ENCODE measurements at regions of chr3 and their contacts with region 1.

Region 1: DNA sequence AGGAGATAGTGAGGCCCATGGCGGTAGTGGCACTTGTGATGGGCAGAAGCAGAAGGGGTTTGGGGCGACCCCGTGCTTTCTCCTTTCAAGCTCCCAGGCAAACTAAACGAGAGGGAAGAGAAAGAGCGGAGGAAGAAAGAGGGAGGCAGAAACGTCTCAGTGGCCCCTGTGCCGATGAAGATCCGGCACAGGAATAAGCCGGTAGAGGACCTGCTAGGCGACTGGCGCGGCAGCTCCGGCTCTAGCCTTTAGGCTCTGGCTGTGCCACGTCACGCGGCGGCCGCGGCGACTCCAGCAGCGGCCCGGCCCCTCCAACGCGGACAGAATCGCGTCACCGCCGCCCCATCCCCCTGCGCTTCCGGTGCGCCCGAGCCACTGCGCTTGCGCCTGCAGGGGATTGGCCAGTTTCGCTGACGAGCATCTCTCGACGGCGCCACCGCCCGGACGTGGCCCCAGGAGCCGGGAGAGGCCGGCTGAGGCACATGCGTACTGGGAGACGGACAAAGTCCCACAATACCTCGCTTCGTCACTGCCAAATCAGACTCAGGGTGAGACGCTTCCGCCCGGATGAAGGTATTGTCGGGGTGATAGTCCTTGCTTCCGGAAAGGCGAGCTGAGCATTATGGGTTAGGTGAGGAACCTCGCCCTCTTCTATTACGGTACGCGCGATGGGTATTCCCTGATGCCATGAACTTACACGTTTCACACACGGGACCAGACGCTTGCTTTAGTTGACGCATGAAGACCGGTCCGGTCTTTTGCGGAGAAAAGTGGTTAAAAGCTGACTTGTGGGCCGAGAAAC is at the start of gene ARF4:
- DNase-seq: peak; percentile 100
- H3K4me3 ChIP-seq: peak within 1 kb of the TSS; percentile 77 to 85 (median 79)
- H3K27ac ChIP-seq: peak within 1 kb of the TSS; percentile 94 to 99 (median 98)
- H3K4me1 ChIP-seq: peaks cover 0 to 50% (median 45%) of the 10 kb centered on the region in 4 donors
- H3K27me3 ChIP-seq: no peaks in the 10 kb centered on the region
- CTCF ChIP-seq: no peak
- EP300 ChIP-seq: peak in 2 of 4 donors; percentile 58 to 86
- POLR2A ChIP-seq: peak; percentile 99
- total RNA-seq, gene ARF4: 88.1 to 96.9 (median 89.3) TPM

Region 2: DNA sequence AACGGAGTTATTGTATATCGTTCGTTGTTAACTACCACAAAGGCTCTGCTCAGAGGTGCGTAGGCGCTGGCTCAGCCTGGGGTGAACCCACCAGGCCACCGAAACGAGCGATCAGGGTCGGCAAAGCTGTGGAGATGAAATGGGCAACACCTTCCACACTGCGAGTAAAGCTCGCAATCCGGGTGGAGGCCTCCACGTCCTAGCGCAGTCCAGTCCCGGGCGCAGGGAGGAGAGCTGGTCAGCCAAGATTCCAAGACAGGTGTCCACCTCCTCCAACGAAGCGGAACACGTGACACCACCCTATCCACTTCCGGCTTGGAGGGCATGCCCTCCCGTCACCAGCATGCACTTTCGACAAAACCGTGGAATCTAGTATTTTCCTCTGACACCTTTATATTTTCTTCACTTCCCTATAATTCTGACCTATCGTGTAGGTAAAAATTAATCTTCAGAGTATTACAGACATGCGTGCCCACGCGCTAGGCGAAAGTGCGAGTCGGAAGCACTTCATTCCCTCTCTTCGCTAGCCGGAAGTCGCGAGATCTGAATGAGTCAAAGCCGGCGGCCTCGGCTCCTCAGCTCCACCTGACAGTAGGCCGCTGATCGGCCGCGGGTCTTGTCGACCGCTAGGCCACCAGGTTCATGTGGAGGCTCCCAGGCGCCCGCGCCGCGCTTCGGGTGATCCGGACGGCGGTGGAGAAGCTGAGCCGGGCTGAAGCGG is 41.4 kb before region 1 on chr3 and contains the start of gene PDE12:
- intact Hi-C with region 1: loop called (anchors 1 kb)
- DNase-seq: peak; percentile 92
- H3K4me3 ChIP-seq: peak within 1 kb of the TSS; percentile 80 to 93 (median 90)
- H3K27ac ChIP-seq: peak within 1 kb of the TSS; percentile 91 to 98 (median 94)
- H3K4me1 ChIP-seq: peaks cover 0 to 39% (median 30%) of the 10 kb centered on the region in 4 donors
- H3K27me3 ChIP-seq: no peaks in the 10 kb centered on the region
- CTCF ChIP-seq: no peak
- EP300 ChIP-seq: no peak
- POLR2A ChIP-seq: peak; percentile 62 to 83
- total RNA-seq, gene PDE12: 11.4 to 17.9 (median 12.4) TPM

Region 3: DNA sequence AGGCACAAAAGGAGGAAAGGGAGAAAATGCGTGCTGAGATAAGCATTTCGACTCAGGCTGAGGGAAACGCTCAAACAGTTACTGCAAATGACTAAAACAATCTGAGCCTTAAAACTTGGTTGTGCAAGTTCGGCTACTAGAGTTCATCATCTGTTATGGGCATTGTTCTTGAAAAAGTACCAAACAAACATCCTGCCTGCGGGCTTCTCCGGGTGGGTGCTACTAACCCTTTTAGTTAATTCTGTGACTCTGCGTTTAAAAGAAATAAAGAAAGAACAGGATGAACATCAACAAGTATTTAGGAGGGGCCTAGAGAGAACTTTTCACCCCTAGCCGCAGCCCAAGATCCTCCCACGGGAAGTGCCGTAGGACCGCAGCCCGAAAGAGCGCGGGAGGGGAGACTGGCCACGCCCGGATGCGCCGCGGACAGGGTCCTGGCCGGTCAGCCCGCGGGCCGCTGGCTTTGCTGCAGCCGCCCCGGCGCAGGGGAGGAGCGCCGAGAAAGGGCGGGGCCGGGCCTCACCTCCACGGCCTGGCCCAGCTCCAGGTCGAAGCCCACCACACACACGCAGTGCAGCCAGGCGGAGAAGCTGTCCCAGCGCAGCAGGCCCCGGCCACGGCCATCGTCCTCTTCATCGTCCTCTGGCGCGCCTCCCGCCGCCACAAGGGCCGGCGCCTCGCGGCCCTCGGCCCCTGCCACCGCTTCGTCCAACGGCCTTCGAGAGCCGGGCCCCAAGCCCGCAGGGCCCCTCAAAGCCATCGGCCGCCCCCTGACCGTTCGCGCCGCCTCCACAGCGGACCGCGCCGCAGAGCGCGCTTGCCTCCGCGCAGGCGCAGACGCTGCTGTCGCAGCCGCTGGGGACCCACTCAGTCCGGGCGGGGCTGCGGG is 95.2 kb after region 1 on chr3 and contains the start of gene DENND6A:
- intact Hi-C with region 1: loop called (anchors 5 kb)
- DNase-seq: peak; percentile 95
- H3K4me3 ChIP-seq: peak within 1 kb of the TSS; percentile 84 to 99 (median 97)
- H3K27ac ChIP-seq: peak within 1 kb of the TSS; percentile 98 to 100 (median 100)
- H3K4me1 ChIP-seq: peaks cover 0 to 43% (median 38%) of the 10 kb centered on the region in 4 donors
- H3K27me3 ChIP-seq: no peaks in the 10 kb centered on the region
- CTCF ChIP-seq: no peak
- EP300 ChIP-seq: no peak
- POLR2A ChIP-seq: peak; percentile 87 to 96
- total RNA-seq, gene DENND6A: 23.8 to 51.7 (median 38.4) TPM

Region 4: DNA sequence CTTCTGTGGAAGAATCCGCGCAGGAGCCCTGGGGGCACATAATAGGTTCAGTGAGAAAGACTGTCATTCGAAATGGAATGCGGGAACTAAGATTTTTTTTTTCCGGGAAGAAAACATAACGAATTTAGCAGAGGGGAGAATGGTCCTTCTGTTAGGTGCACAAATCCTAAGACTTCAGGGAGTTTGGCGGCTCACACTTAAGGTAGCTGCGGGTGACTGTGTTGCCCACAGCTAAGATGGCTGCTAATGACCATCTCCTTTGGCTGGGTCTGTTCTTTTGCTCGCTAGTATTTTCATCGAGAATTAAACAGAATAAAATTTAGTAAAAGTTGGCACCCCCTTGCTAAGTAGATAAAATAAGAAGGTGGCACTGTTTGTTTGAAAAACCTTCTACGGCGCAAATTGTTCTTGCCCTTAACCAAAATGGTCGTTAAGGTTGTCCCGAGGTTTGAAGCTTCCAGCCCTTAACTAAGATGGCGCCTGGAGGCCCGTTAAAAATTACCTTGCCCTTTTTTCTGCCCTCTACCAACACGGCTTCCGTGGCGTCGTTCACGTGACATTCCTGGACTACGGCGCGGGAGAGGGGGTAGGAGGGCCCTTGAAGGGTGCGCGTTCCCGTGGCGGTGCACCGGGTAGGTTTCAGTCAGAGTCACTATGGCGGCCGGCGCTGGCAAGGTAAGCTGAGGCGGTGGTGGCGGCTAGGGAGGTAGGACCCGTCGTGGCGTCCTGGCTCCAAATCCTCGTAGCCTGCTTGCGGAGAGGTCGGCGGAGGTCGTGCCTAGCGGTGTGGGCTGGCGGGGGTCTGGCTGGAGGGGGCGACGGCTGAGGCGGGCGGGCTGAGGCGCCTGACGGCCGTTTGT is 158.6 kb after region 1 on chr3 and contains the start of gene SLMAP:
- intact Hi-C with region 1: loop called (anchors 2 kb)
- DNase-seq: peak; percentile 99
- H3K4me3 ChIP-seq: peak within 1 kb of the TSS; percentile 80 to 96 (median 88)
- H3K27ac ChIP-seq: peak within 1 kb of the TSS; percentile 87 to 93 (median 90)
- H3K4me1 ChIP-seq: peaks cover 0 to 43% (median 36%) of the 10 kb centered on the region in 4 donors
- H3K27me3 ChIP-seq: no peaks in the 10 kb centered on the region
- CTCF ChIP-seq: no peak
- EP300 ChIP-seq: peak in 1 of 4 donors; percentile 26
- POLR2A ChIP-seq: peak in 1 of 2 donors; percentile 47
- total RNA-seq, gene SLMAP: 300 to 745 (median 456) TPM